Activated CD4-positive, alpha-beta memory T cell treated with anti-CD3 and anti-CD28 coated beads for 36 hours (primary cell): ENCODE measurements at regions of chr19 and their contacts with region 1.

Region 1: GRCh38 chr19:37779127-37780005 is at the start of gene ZNF573:
- DNase-seq: peak; percentile 89
- H3K4me3 Mint-ChIP-seq: peak within 1 kb of the TSS; percentile 93
- H3K27ac Mint-ChIP-seq: peak within 1 kb of the TSS; percentile 97
- H3K4me1 Mint-ChIP-seq: peaks cover 31% of the 10 kb centered on the region
- H3K27me3 Mint-ChIP-seq: no peaks in the 10 kb centered on the region
- total RNA-seq, gene ZNF573: 7.7 to 7.8 TPM

Region 2: DNA sequence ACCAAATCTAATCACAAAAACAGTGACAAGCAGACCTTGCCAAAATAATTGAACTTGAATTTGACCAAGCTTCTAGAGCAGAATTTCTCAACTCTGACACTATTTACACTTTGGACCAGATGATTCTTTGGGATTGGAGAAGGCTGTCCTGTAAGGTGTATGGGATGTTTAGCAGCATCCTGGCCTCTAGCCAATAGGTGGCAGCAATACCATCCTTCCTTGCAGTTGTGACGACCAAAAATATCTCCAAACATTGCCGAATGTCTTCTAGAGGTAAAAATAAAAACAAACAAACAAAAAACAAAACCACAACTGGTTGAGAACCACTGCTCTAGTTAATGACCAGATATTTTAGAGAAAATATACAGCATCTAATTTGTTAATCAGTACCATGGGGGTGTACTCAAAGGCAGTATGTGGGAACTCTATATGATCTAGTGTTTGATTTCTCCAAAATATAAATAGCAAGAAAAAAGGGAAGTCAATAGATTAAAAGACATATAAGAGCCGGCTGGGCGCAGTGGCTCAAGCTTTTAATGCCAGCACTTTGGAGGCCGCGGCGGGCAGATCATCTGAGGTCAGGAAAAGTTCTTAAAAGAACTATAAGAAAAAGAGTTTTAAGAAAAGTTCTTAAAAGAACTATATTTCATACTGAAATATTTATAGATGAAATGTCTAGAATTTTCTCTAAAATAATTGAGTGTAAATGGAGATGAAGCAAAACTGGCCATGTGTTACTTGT is 469.4 kb before region 1 on chr19:
- CTCF ChIA-PET with region 1: no interaction called
- POLR2A ChIA-PET with region 1: no interaction called
- intact Hi-C with region 1: loop called (anchors 10 kb)
- DNase-seq: peak; percentile 39
- H3K4me3 Mint-ChIP-seq: no peak overlapping the region
- H3K27ac Mint-ChIP-seq: no peak overlapping the region
- H3K4me1 Mint-ChIP-seq: peaks cover 19% of the 10 kb centered on the region
- H3K27me3 Mint-ChIP-seq: peaks cover 2% of the 10 kb centered on the region

Region 3: DNA sequence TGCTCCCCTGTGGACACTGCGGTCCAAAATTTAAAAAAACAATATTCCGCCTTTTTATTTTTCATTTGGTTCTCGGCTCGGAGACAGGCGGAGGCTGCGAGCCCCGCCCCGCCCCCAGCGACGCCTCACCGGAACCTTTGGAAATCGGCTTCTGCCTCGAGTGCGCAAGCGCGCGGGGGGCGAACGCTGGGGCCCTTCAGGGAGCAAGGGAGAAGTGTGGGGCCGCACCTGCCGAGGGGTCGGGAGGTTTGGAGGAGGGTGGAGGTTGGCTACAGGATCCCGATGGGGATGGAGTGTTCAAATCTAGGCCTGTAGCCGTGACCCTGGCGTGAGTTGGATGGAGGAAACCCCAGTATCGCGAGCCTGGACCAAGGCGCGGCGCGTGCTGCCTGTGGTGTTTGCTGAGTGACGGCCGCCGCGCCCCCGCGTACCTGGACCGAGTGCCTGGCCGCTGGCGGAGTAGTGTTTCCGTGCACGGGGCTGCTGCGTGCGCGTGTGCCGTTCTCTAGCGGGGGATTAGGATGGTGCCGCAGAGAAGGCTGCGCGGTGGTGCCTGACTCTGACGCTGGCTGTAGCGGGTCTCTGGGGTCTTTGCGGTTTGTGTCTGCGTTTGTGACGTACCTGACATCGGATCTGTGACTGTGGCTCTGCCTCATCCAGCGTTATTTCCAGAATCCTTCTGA is 123.5 kb before region 1 on chr19:
- CTCF ChIA-PET with region 1: no interaction called
- POLR2A ChIA-PET with region 1: no interaction called
- intact Hi-C with region 1: loop called (anchors 1 kb)
- DNase-seq: peak; percentile 90
- H3K4me3 Mint-ChIP-seq: peak overlapping the region; percentile 91
- H3K27ac Mint-ChIP-seq: peak overlapping the region; percentile 95
- H3K4me1 Mint-ChIP-seq: peaks cover 27% of the 10 kb centered on the region
- H3K27me3 Mint-ChIP-seq: no peaks in the 10 kb centered on the region

Region 4: GRCh38 chr19:37738371-37738770 is 41.0 kb before region 1 on chr19:
- CTCF ChIA-PET with region 1: no interaction called
- POLR2A ChIA-PET with region 1: no interaction called
- intact Hi-C with region 1: no loop called
- DNase-seq: no peak
- H3K4me3 Mint-ChIP-seq: no peak overlapping the region
- H3K27ac Mint-ChIP-seq: no peak overlapping the region
- H3K4me1 Mint-ChIP-seq: no peaks in the 10 kb centered on the region
- H3K27me3 Mint-ChIP-seq: no peaks in the 10 kb centered on the region

Region 5: DNA sequence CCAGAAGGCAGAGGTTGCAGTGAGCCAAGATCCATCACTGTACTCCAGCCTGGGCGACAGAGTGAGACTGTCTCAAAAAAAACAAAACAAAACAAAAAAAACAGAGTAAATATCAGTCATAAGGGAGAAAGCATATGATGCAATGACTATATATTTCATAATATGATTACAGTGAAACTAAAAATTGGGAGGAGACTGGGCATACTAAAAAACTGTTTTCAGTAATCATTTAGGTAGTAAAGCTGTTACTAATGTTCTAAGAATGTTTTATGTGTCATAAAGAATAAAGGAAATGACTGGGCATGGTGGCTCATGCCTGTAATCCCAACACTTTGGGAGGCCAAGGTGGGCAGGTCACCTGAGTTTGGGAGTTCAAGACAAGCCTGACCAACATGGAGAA is 15.9 kb before region 1 on chr19:
- CTCF ChIA-PET with region 1: no interaction called
- POLR2A ChIA-PET with region 1: no interaction called
- intact Hi-C with region 1: loop called (anchors 1 kb)
- DNase-seq: peak; percentile 45
- H3K4me3 Mint-ChIP-seq: no peak overlapping the region
- H3K27ac Mint-ChIP-seq: peak overlapping the region; percentile 51
- H3K4me1 Mint-ChIP-seq: peaks cover 10% of the 10 kb centered on the region
- H3K27me3 Mint-ChIP-seq: no peaks in the 10 kb centered on the region

Region 6: GRCh38 chr19:37867831-37868230 is 88.5 kb after region 1 on chr19:
- CTCF ChIA-PET with region 1: no interaction called
- POLR2A ChIA-PET with region 1: no interaction called
- intact Hi-C with region 1: no loop called
- DNase-seq: no peak
- H3K4me3 Mint-ChIP-seq: no peak overlapping the region
- H3K27ac Mint-ChIP-seq: no peak overlapping the region
- H3K4me1 Mint-ChIP-seq: no peaks in the 10 kb centered on the region
- H3K27me3 Mint-ChIP-seq: no peaks in the 10 kb centered on the region

Region 7: GRCh38 chr19:38315657-38316476 is 536.5 kb after region 1 on chr19 and contains the start of gene YIF1B:
- CTCF ChIA-PET with region 1: no interaction called
- POLR2A ChIA-PET with region 1: no interaction called
- intact Hi-C with region 1: loop called (anchors 5 kb)
- DNase-seq: peak; percentile 98
- H3K4me3 Mint-ChIP-seq: peak within 1 kb of the TSS; percentile 83
- H3K27ac Mint-ChIP-seq: peak within 1 kb of the TSS; percentile 88
- H3K4me1 Mint-ChIP-seq: peaks cover 38% of the 10 kb centered on the region
- H3K27me3 Mint-ChIP-seq: no peaks in the 10 kb centered on the region
- total RNA-seq, gene YIF1B: 79.7 to 82.3 TPM